ENCODE measurements at regions of chr7 and their contacts with region 1.

Region 1: DNA sequence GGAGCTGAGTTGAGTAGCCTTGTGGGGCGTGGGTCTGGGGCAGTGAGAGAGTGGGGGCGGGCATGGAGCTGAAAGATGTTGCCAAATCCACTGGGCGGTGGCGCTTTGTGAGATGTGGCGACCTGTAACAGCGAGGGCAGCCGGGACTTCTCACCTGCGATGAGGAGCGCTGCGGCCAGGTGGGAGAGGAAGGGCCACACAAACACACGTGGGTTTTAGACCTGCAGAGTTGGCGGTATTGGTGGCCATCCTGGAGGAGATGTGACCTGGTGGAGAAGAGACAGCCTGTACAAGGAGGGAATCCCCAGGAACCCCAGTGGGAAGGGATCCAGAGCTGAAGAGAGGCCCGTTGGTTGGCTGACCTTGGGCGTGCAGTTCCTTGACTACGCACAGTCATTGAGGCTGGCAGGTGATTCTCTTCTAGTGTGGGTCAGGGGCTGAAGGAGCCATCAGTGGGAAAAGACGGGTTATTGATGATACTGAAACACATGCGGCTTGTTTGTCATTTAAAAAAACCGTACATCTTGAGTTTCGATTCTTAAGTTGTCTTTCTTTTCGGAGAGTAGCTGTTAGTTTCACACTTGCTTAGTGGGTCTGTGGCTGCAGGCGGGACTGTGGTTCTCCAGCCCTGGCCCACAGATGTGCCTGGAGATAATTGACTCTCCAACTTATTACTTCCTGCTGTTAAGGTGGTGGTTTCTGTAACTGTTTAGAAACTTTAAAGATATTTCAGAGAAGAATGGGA is 2.4 kb downstream of the CHST12 start:
- DNase-seq: peak in 33 of 35 experiments; percentile 29 to 78 (median 56)
- ATAC-seq: peak in 3 of 4 experiments; percentile 18 to 30 (median 21)
- H3K4me3 ChIP-seq: peak overlapping the region; percentile 53 to 83
- H3K4me3 Mint-ChIP-seq: peak overlapping the region; percentile 75 to 81 (median 79)
- H3K27ac ChIP-seq: peak overlapping the region; percentile 77
- H3K27ac Mint-ChIP-seq: peak overlapping the region; percentile 86 to 92
- H3K4me1 ChIP-seq: peaks cover 8 to 74% of the 10 kb centered on the region in 2 experiments
- H3K4me1 Mint-ChIP-seq: peaks cover 63 to 67% (median 66%) of the 10 kb centered on the region in 3 donors
- H3K27me3 ChIP-seq: no peaks in the 10 kb centered on the region
- H3K27me3 Mint-ChIP-seq: no peaks in the 10 kb centered on the region

Region 2: GRCh38 chr7:2369139-2369538 is 36.6 kb before region 1 on chr7:
- CTCF ChIA-PET with region 1: no interaction called
- POLR2A ChIA-PET with region 1: interaction called in 1 of 2 experiments, 11 read pairs
- DNase-seq: no peak
- ATAC-seq: no peak
- H3K4me3 ChIP-seq: no peak overlapping the region
- H3K4me3 Mint-ChIP-seq: no peak overlapping the region
- H3K27ac ChIP-seq: no peak overlapping the region
- H3K27ac Mint-ChIP-seq: no peak overlapping the region
- H3K4me1 ChIP-seq: no peaks in the 10 kb centered on the region
- H3K4me1 Mint-ChIP-seq: no peaks in the 10 kb centered on the region
- H3K27me3 ChIP-seq: no peaks in the 10 kb centered on the region
- H3K27me3 Mint-ChIP-seq: no peaks in the 10 kb centered on the region

Region 3: GRCh38 chr7:2431260-2431867 is 25.6 kb after region 1 on chr7:
- CTCF ChIA-PET with region 1: interaction called in 1 of 2 experiments, 10 read pairs
- POLR2A ChIA-PET with region 1: interaction called in 1 of 2 experiments, 9 read pairs
- DNase-seq: peak in 25 of 35 experiments; percentile 16 to 62 (median 31)
- ATAC-seq: peak; percentile 50 to 66 (median 56)
- H3K4me3 ChIP-seq: no peak overlapping the region
- H3K4me3 Mint-ChIP-seq: no peak overlapping the region
- H3K27ac ChIP-seq: no peak overlapping the region
- H3K27ac Mint-ChIP-seq: no peak overlapping the region
- H3K4me1 ChIP-seq: peaks cover 0 to 16% of the 10 kb centered on the region in 2 experiments
- H3K4me1 Mint-ChIP-seq: peaks cover 6 to 17% (median 9%) of the 10 kb centered on the region in 3 donors
- H3K27me3 ChIP-seq: no peaks in the 10 kb centered on the region
- H3K27me3 Mint-ChIP-seq: no peaks in the 10 kb centered on the region

Measured in T-cell (primary cell).